Endothelial cell of umbilical vein (primary cell): ENCODE measurements at regions of chr5 and their contacts with region 1.

Region 1: DNA sequence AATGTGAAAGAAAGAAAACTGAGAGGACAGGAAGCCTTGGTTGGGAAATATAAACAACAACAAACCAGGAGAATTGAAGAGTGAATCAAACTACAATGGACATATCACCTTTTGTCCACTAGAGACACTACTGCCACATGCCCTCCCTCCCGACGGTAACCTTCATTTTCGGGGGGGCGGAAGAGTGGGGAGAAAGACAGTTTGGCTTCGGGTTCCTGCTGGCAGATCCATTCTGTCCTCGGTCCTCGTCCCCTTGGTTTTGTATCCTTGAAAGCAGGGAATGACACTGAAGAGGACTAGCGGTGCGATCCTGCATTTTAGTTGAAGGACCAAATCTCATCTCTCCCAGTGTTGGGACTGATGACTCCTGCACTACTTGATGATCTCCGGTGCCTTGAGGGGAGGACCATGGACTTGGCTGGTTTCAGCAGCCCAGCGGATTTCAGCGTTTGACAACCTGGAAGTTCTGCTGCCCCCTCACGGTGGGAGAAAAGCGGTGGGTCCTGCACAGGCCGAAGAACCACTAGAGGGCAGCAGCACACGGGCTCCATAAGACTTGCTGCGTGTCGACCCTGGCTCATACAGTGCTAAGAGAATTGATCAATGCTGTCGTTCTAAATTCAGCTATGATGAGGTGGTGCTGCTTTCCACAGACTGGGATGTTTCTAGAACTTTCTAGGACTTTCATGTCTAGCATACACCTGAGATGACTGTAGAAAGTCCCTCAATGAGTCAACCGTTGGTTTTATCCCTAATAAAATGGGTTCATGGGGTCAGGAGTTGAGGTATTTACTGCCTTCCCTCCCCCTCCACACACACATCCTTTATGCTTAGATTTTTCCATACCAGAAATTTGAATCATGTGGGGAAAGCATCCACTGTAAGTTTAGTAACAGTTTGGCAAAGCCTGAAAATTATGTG is 15.1 kb upstream of the ZNF131 start:
- DNase-seq: peak; percentile 98
- H3K4me3 ChIP-seq: peak overlapping the region in 2 of 3 experiments; percentile 20 to 29
- H3K27ac ChIP-seq: no peak overlapping the region
- H3K4me1 ChIP-seq: no peaks in the 10 kb centered on the region
- H3K27me3 ChIP-seq: no peaks in the 10 kb centered on the region
- CTCF ChIP-seq: peak; percentile 100
- POLR2A ChIP-seq: no peak

Region 2: DNA sequence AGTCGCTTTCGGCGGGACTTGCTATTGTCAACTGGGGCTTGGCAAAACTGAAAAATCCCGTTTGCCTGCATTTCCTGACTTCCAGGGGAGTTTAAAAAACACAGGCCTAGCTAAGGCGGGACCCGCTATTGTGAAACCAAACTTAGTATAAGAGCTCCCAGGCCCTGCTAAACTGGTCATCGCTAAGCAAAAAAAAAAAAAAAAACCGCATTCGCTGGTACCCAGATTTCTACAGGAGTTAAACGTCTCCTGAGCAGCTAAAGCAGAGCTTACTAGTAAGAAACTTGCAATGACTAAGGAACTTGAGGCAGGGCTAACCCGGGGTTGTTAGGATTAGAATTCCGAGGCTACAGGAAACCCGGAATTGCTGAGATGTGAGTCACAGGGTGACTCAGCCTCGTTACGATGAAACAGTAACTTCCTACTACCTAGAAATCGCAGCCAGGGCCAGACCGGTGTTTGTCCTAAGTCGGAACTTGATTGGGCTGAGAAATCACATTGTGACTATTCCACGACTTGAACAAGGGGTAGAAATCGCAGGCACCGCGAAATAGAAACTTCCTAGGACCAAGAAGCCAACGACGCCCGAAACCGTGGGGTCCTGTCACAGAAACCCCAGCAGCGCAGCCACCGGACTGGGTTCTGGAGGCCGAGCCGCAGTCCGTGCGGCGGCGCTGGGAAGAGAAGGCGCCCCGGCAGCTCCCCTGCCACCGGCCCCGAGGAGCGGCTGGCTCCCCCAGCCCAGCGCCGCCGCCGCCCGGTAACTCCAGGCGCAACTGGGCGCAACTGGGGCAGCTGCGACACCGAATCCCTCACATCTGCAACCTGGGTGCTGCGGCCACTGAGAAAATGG is 155.0 kb before region 1 on chr5:
- CTCF ChIA-PET with region 1: no interaction called
- POLR2A ChIA-PET with region 1: no interaction called
- dilution Hi-C with region 1: no loop called
- intact Hi-C with region 1: loop called (anchors 1 kb)
- DNase-seq: peak; percentile 98
- H3K4me3 ChIP-seq: peak overlapping the region; percentile 11 to 55 (median 49)
- H3K27ac ChIP-seq: peak overlapping the region; percentile 99
- H3K4me1 ChIP-seq: peaks cover 17% of the 10 kb centered on the region
- H3K27me3 ChIP-seq: no peaks in the 10 kb centered on the region
- CTCF ChIP-seq: no peak
- POLR2A ChIP-seq: peak; percentile 86

Region 3: GRCh38 chr5:43040287-43041098 is 65.1 kb before region 1 on chr5 and contains the start of gene ANXA2R:
- CTCF ChIA-PET with region 1: interaction called, 4 read pairs
- POLR2A ChIA-PET with region 1: no interaction called
- dilution Hi-C with region 1: no loop called
- intact Hi-C with region 1: loop called (anchors 1 kb)
- DNase-seq: peak; percentile 97
- H3K4me3 ChIP-seq: peak within 1 kb of the TSS; percentile 51 to 87 (median 54)
- H3K27ac ChIP-seq: peak within 1 kb of the TSS; percentile 77
- H3K4me1 ChIP-seq: peaks cover 30% of the 10 kb centered on the region
- H3K27me3 ChIP-seq: no peaks in the 10 kb centered on the region
- CTCF ChIP-seq: peak; percentile 81 to 86
- POLR2A ChIP-seq: no peak
- total RNA-seq, gene ANXA2R: 6.6 and 8.1 TPM in 2 replicates

Region 4: DNA sequence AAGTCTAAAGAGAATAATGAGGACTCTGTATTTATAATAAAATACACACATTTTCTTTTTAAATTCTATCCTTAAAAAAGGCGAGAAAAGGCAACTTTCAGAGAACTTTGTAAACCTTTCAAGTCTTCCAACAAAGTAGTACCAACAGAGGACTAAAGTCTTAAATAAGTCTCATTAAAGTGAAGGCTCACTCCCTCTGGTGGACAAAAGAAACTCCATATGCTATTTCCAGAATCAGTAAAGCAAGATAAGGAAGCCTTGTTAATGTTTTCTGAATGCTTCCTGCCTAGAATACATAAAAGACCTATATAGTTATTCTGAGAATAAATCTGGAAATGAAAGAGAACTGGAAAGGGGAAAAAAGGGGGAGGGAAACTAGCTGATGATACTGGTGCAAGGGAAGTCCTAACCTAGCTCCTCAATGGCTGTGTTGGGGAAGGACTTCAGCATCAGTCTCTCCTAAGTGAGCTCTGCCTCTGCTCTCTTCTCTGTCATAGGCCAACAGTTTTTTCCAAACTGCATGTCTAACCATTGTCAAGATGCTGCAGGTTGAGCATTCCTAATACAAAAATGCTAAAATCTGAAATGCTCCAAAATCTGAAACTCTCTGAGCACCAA is 200.4 kb after region 1 on chr5:
- CTCF ChIA-PET with region 1: interaction called, 3 read pairs
- POLR2A ChIA-PET with region 1: no interaction called
- dilution Hi-C with region 1: no loop called
- intact Hi-C with region 1: loop called (anchors 2 kb)
- DNase-seq: peak; percentile 71
- H3K4me3 ChIP-seq: no peak overlapping the region
- H3K27ac ChIP-seq: no peak overlapping the region
- H3K4me1 ChIP-seq: peaks cover 19% of the 10 kb centered on the region
- H3K27me3 ChIP-seq: no peaks in the 10 kb centered on the region
- CTCF ChIP-seq: peak; percentile 39 to 43
- POLR2A ChIP-seq: no peak